Right ventricle myocardium superior (tissue), 1 donor: ENCODE measurements at regions of chr3 and their contacts with region 1.

Region 1: DNA sequence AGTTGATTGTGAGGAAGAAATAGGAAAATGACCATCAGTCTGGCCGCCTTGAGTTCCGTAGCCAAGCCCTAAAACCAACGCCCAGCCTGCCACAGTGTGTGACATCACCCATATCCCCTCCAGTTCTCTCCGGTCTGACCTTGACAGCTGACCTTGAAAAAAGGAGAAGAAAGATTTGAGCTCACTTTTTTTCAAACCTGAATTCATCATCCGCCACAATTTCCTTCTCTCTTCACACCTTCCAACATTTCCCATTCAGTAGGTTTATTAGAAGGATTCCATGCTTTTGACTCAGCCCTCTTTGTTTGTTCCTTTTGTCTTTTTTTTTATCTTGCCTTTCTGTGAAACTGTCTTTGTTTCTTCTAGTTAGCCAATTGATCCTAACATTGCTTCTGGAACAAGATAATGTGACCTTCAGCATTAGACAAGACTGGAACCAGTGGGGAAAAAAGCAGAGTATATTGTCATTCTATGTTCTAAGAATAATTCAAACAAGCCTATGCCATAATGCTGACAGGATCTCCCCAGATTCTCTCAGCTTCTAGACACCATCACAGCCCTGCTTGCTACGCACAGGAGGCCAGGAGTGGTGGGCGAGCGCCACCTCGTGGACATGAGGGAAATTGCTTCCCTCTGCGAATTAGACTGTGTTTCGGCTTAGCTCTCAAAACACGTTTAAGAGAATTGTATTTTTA is 283.1 kb downstream of the FGF12 start:
- DNase-seq: peak; percentile 75
- ATAC-seq: peak; percentile 82

Region 2: DNA sequence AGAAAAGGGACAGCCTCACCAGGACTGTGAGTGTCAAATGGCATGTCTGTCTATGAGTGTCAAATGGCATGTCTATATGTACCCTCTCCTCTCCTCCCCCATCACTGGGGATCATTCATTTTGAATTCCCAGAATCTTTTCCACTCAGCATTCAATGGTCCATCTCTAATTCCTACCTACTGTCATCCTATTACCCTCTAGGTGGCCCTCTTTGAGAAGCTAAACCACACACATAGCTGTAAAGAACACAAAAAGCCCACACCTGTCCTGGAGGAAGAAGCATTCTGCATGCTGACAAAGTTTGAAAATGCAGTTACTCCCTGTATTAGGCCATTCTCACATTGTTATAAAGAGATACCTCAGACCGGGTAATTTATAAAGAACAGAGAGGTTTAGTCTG is 1029.5 kb before region 1 on chr3:
- intact Hi-C with region 1: loop called (anchors 5 kb)
- DNase-seq: no peak
- ATAC-seq: no peak

Region 3: DNA sequence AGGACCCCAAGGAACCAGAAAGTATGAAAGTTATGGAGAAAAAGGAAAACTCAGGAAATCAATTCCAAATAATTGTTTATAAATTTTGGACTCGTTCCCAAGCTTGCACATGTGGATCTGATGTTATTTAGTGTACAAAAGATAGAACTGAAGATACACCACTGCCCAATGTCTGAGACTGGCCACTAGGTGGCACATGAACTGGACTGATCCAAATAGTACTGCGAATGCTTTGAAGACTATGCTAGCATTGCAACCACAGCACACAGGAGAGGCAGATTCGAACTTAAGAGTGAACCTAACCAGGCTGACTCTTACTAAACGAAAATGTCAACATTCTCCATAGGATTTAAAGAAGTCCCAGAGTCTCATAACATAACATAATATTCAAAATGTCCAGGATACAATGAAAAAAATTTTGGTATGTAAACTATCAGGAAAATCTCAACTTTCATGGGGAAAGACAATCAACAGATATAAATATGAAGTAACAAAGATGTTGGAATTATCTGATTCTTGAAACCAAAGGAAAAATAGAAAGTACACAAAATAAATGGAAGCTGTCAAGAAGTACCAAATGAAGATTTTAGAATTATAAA is 313.6 kb before region 1 on chr3:
- intact Hi-C with region 1: loop called (anchors 5 kb)
- DNase-seq: no peak
- ATAC-seq: peak; percentile 82